Endothelial cell of umbilical vein (primary cell): ENCODE measurements at regions of chrX and their contacts with region 1.

Region 1: GRCh38 chrX:67555578-67556203 is 11.9 kb downstream of the AR start:
- DNase-seq: peak; percentile 31
- H3K4me3 ChIP-seq: no peak overlapping the region
- H3K27ac ChIP-seq: no peak overlapping the region
- H3K4me1 ChIP-seq: peaks cover 22% of the 10 kb centered on the region
- H3K27me3 ChIP-seq: no peaks in the 10 kb centered on the region
- CTCF ChIP-seq: peak; percentile 64 to 68
- POLR2A ChIP-seq: no peak

Region 2: DNA sequence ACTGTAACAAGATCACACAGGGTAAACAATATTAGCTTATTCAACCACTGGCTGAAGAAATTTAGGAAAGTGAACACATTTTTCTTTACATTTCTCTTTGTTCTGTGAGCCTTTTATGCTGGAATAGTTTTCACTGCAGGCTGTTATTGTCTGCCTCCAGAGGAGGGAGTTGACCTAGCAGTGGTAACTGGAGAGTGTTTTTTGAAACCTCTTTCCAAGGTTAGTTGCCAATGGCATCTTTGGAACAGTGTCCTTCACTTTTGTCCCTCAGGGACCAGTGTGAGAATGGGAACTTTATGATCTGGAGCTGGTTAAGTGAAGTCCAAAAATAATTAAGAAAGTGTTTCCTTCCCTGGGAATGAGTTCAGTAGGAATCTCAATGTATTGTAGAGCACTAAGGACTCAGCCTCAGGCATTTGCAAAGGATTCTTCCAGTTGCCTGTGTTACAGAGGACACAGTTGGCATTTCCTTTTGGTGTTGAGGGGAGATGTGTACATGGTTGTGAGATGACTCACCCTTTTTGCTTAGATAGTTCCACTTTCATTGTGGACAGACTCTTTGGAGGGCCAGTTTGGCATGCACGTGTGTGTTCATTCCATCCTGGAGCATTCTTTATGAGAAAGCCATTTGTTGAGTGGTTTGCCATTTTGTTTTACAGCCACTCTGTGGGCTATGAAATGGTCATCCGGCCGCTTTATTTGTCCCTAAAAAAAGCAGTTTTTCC is 49.5 kb after region 1 on chrX:
- CTCF ChIA-PET with region 1: interaction called, 3 read pairs
- POLR2A ChIA-PET with region 1: no interaction called
- dilution Hi-C with region 1: no loop called
- intact Hi-C with region 1: loop called (anchors 2 kb)
- DNase-seq: peak; percentile 73
- H3K4me3 ChIP-seq: no peak overlapping the region
- H3K27ac ChIP-seq: peak overlapping the region; percentile 92
- H3K4me1 ChIP-seq: peaks cover 22% of the 10 kb centered on the region
- H3K27me3 ChIP-seq: no peaks in the 10 kb centered on the region
- CTCF ChIP-seq: peak in 1 of 2 donors; percentile 20
- POLR2A ChIP-seq: no peak